ENCODE measurements at regions of chr11 and their contacts with region 1.

Region 1: GRCh38 chr11:106156290-106156937 is 79.0 kb downstream of the AASDHPPT start:
- DNase-seq: peak; percentile 64 to 71
- H3K4me3 ChIP-seq: no peak overlapping the region
- H3K4me3 Mint-ChIP-seq: no peak overlapping the region
- H3K27ac Mint-ChIP-seq: peak overlapping the region; percentile 52
- H3K4me1 ChIP-seq: peaks cover 5% of the 10 kb centered on the region
- H3K4me1 Mint-ChIP-seq: peaks cover 16% of the 10 kb centered on the region
- H3K27me3 ChIP-seq: no peaks in the 10 kb centered on the region
- H3K27me3 Mint-ChIP-seq: no peaks in the 10 kb centered on the region
- CTCF ChIP-seq: peak; percentile 69 to 71

Region 2: DNA sequence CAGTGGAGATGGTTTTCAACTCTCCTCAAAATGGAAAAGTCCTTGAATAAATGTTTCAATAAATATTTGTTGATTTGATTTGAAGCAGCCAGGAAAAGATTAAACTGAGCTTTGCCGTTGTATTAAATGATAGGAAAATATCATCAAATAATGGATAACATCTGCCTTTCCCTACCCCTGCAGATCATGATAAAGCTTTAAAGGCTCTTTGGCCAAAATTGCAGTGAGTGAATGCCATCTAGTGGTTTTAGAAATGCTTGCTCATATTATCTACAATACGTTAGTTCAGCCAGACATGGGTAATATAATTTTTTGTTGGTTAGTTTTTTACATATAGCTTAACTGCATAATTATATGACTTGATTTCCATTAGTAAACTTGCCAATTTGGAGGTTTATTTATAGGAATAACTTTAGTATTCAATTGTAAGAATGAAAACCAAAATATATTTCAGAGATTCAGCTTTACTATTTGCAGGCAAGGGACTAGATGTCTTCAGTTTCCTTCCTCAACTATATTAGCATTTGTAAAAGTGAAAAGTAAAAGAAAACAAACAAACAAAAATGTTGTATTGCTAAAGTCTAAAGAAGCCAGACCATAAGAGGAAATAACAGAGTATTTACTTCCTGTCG is 293.6 kb before region 1 on chr11:
- CTCF ChIA-PET with region 1: no interaction called
- POLR2A ChIA-PET with region 1: no interaction called
- intact Hi-C with region 1: no loop called
- DNase-seq: peak in 1 of 2 experiments; percentile 50
- H3K4me3 ChIP-seq: no peak overlapping the region
- H3K4me3 Mint-ChIP-seq: no peak overlapping the region
- H3K27ac Mint-ChIP-seq: no peak overlapping the region
- H3K4me1 ChIP-seq: no peaks in the 10 kb centered on the region
- H3K4me1 Mint-ChIP-seq: no peaks in the 10 kb centered on the region
- H3K27me3 ChIP-seq: no peaks in the 10 kb centered on the region
- H3K27me3 Mint-ChIP-seq: peaks cover 2% of the 10 kb centered on the region
- CTCF ChIP-seq: peak; percentile 77 to 84

Region 3: GRCh38 chr11:106087815-106088435 is 68.5 kb before region 1 on chr11:
- CTCF ChIA-PET with region 1: interaction called, 6 read pairs
- POLR2A ChIA-PET with region 1: no interaction called
- intact Hi-C with region 1: loop called (anchors 1 kb)
- DNase-seq: peak; percentile 57 to 70
- H3K4me3 ChIP-seq: no peak overlapping the region
- H3K4me3 Mint-ChIP-seq: no peak overlapping the region
- H3K27ac Mint-ChIP-seq: no peak overlapping the region
- H3K4me1 ChIP-seq: peaks cover 6% of the 10 kb centered on the region
- H3K4me1 Mint-ChIP-seq: peaks cover 25% of the 10 kb centered on the region
- H3K27me3 ChIP-seq: no peaks in the 10 kb centered on the region
- H3K27me3 Mint-ChIP-seq: no peaks in the 10 kb centered on the region
- CTCF ChIP-seq: peak; percentile 96 to 99

Region 4: DNA sequence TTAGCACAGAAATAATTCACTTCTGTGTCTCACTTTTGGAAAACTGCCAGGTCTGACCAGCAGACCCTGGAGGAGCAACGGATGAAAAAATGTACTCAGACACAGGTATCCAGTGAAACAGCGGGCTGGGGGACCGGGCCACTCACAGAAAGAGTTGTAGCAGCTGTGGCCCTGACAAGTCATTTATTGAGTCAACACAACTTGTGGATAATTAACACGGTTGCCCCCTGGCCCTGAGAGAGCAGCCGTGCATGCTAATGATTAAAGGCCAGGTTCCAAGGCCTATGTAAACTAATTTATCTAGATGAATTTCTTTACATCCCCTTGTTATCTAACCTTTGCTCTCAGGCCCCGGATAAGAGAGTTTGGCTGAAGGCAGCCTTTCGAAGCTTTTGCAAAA is 52.4 kb after region 1 on chr11:
- CTCF ChIA-PET with region 1: interaction called, 4 read pairs
- POLR2A ChIA-PET with region 1: no interaction called
- intact Hi-C with region 1: loop called (anchors 1 kb)
- DNase-seq: peak; percentile 85 to 95
- H3K4me3 ChIP-seq: no peak overlapping the region
- H3K4me3 Mint-ChIP-seq: peak overlapping the region; percentile 7
- H3K27ac Mint-ChIP-seq: peak overlapping the region; percentile 67
- H3K4me1 ChIP-seq: peaks cover 29% of the 10 kb centered on the region
- H3K4me1 Mint-ChIP-seq: peaks cover 27% of the 10 kb centered on the region
- H3K27me3 ChIP-seq: no peaks in the 10 kb centered on the region
- H3K27me3 Mint-ChIP-seq: no peaks in the 10 kb centered on the region
- CTCF ChIP-seq: no peak

Region 5: GRCh38 chr11:106306942-106307341 is 150.5 kb after region 1 on chr11:
- CTCF ChIA-PET with region 1: interaction called, 3 read pairs
- POLR2A ChIA-PET with region 1: no interaction called
- intact Hi-C with region 1: loop called (anchors 1 kb)
- DNase-seq: peak; percentile 44 to 56
- H3K4me3 ChIP-seq: no peak overlapping the region
- H3K4me3 Mint-ChIP-seq: no peak overlapping the region
- H3K27ac Mint-ChIP-seq: no peak overlapping the region
- H3K4me1 ChIP-seq: no peaks in the 10 kb centered on the region
- H3K4me1 Mint-ChIP-seq: peaks cover 10% of the 10 kb centered on the region
- H3K27me3 ChIP-seq: no peaks in the 10 kb centered on the region
- H3K27me3 Mint-ChIP-seq: no peaks in the 10 kb centered on the region
- CTCF ChIP-seq: peak in 1 of 2 experiments; percentile 24

Region 6: GRCh38 chr11:106724293-106724892 is 568.0 kb after region 1 on chr11:
- CTCF ChIA-PET with region 1: no interaction called
- POLR2A ChIA-PET with region 1: no interaction called
- intact Hi-C with region 1: loop called (anchors 5 kb)
- DNase-seq: no peak
- H3K4me3 ChIP-seq: no peak overlapping the region
- H3K4me3 Mint-ChIP-seq: no peak overlapping the region
- H3K27ac Mint-ChIP-seq: no peak overlapping the region
- H3K4me1 ChIP-seq: no peaks in the 10 kb centered on the region
- H3K4me1 Mint-ChIP-seq: peaks cover 14% of the 10 kb centered on the region
- H3K27me3 ChIP-seq: no peaks in the 10 kb centered on the region
- H3K27me3 Mint-ChIP-seq: no peaks in the 10 kb centered on the region
- CTCF ChIP-seq: no peak